ENCODE measurements at regions of chr1 and their contacts with region 1.

Region 1: DNA sequence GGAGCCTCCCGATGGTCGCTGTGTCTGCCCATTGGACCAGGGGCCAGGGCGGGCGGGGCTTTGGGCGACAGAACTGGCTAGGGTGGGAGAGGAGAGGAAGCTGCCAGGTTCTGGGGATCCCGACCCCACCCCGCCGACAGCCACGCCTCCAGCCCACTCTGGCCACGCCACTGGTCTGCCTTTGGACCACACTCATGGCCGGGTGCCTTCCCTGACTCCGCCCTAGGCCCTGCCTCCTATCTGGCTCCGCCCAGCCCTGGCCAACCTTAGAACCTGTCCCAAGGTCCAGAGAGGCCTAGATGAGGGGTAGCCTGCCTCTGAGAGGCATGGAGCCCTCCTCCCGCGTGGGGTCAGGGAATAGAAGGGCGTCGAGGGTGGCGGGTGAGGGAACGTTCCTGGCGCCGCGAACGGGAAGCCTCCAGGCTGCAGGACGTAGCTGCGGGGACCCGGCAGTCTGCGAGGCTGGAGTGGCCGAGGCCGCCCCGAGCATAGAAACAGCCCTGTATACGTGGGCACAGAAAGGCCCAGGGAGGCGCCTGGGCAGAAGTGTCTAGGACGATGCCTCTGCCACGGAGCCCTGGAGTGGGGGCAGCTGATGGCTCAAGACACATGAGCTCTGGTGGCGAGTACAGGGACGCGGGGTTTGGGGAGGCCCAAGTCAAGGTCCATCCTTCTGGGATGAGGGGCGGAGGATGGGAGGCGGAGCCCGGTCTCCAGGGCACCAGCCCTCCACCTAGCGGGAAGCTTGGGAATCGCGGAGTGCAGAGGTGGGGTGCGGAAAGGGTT is 11.5 kb upstream of the COL16A1 start:
- DNase-seq: peak; percentile 61
- H3K4me3 Mint-ChIP-seq: no peak overlapping the region
- H3K27ac Mint-ChIP-seq: no peak overlapping the region
- H3K4me1 Mint-ChIP-seq: peaks cover 32% of the 10 kb centered on the region
- H3K27me3 Mint-ChIP-seq: peaks cover 13% of the 10 kb centered on the region
- CTCF ChIP-seq: peak; percentile 55

Region 2: DNA sequence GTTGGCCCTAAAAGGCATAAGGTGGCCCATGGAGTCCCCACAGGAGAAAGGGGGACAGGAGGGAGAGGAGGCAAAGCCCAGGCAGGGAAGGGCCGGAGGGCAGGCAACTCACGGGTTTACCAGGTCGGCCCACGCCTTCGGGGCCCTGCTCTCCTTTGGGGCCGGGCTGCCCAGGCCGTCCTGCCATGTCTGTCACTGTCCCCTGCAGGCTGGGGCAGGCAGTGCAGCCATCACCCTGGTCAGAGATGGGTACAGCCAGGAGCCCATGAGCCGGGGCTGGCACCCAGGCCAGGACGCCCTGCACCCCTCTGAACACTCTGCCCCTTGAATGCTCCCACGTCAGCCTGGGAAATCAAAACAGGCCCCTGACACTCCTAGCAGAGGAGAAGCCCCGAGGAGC is 31.3 kb before region 1 on chr1:
- CTCF ChIA-PET with region 1: no interaction called
- POLR2A ChIA-PET with region 1: no interaction called
- intact Hi-C with region 1: no loop called
- DNase-seq: peak; percentile 32
- H3K4me3 Mint-ChIP-seq: no peak overlapping the region
- H3K27ac Mint-ChIP-seq: no peak overlapping the region
- H3K4me1 Mint-ChIP-seq: peaks cover 8% of the 10 kb centered on the region
- H3K27me3 Mint-ChIP-seq: no peaks in the 10 kb centered on the region
- CTCF ChIP-seq: peak; percentile 42

Region 3: GRCh38 chr1:31725777-31726535 is 10.7 kb after region 1 on chr1:
- CTCF ChIA-PET with region 1: no interaction called
- POLR2A ChIA-PET with region 1: interaction called, 12 read pairs
- intact Hi-C with region 1: no loop called
- DNase-seq: no peak
- H3K4me3 Mint-ChIP-seq: no peak overlapping the region
- H3K27ac Mint-ChIP-seq: no peak overlapping the region
- H3K4me1 Mint-ChIP-seq: no peaks in the 10 kb centered on the region
- H3K27me3 Mint-ChIP-seq: peaks cover 15% of the 10 kb centered on the region
- CTCF ChIP-seq: no peak

Measured in MCF 10A (cell line).